ENCODE measurements at regions of chr2 and their contacts with region 1.

Region 1: DNA sequence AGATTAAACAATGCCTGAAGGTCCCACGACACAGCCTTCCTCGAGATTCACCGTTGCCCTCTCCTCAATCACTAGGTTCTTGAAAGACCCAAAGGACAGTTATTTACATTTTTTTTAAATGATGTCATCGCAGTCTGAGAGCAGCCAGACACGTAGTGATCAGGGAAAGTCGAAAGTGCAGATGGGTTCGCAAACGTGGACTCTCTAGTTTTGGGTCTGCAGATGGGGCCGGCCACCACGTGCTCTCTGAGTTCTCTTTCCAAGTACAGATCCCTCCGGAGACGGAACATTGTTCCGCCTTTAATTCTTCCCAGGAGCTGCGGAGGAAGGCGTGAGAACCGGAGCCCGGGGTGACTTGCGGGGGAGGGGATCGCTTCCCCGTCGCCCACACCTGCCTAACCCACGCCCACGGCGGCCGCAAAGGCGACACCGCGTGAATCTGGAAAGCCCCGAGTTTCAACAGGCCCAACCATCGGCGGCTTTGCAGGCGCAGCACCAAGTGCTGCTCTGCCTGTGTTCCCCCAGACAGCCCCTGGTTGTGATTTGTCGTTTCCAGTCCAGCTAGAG is 54.3 kb downstream of the PKDCC start:
- DNase-seq: peak; percentile 88
- H3K4me3 Mint-ChIP-seq: peak overlapping the region; percentile 65
- H3K27ac Mint-ChIP-seq: peak overlapping the region; percentile 91
- H3K4me1 Mint-ChIP-seq: peaks cover 45% of the 10 kb centered on the region
- H3K27me3 Mint-ChIP-seq: no peaks in the 10 kb centered on the region

Region 2: DNA sequence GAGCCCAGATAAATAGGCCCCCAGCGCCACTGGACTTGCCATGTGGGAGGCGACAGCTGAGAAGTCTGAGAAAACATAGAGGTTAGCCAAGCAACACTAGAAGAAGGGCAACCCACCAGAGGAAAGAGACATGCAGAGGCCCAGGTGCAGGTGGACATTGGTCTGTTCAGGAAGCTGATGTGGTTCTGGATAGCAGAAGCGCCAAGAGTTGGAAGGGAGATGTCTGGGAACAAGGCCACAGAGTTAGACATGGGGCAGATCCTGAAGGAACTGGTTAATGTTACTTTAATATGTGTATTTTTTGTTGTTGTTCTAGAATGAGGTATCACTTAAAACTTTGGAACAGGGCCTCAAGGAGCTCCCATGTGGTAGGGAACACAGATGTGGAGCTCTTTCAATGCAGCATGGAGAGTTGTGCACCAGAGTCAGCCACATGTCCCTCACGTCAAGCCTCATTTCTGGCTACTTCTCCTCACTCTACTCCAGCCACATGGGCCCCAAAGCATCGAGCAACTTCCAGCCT is 116.5 kb before region 1 on chr2:
- CTCF ChIA-PET with region 1: no interaction called
- POLR2A ChIA-PET with region 1: no interaction called
- DNase-seq: no peak
- H3K4me3 Mint-ChIP-seq: no peak overlapping the region
- H3K27ac Mint-ChIP-seq: no peak overlapping the region
- H3K4me1 Mint-ChIP-seq: no peaks in the 10 kb centered on the region
- H3K27me3 Mint-ChIP-seq: peaks cover 17% of the 10 kb centered on the region

Region 3: GRCh38 chr2:42028571-42029148 is 73.4 kb before region 1 on chr2:
- CTCF ChIA-PET with region 1: no interaction called
- POLR2A ChIA-PET with region 1: no interaction called
- DNase-seq: no peak
- H3K4me3 Mint-ChIP-seq: no peak overlapping the region
- H3K27ac Mint-ChIP-seq: no peak overlapping the region
- H3K4me1 Mint-ChIP-seq: no peaks in the 10 kb centered on the region
- H3K27me3 Mint-ChIP-seq: peaks cover 27% of the 10 kb centered on the region

Region 4: DNA sequence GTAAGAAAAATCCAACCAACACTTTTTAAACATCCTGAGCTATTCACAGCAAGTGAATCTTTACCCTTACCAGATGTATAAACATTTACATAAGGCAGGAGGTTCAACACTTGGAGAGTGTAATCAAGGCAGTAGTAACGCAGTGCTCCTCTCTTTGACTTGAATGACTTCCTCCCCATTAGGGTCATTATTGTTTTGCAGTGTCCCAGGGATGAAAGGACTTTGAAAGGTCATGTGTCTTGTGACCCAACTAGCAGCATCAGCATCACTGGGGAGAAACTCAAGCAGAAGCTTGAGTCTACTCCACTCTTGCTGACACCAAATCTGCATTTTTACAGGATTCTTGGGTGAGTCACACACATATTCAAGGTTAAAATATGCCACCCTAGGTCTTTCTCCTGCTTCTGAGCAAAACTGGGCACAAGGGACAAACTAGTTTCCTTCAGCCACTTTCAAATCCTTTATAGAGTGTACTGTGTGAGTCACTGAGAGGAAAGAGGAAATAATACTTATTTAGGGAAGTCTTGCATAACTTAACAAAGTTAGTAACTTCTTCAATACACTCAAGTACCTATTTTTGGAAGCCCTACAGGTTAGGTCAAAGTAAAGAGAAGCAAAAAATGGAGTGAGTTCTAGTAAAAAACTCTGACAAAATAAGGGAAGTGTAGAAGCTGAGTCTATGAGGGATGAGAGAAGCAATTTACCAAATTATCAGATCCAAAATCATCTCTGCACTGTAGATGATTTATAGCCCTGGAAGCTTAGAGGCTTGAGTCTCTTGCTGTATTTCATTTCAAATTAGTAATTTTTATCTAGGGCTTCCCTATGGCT is 16.0 kb after region 1 on chr2:
- CTCF ChIA-PET with region 1: interaction called, 15 read pairs
- POLR2A ChIA-PET with region 1: interaction called, 240 read pairs
- DNase-seq: no peak
- H3K4me3 Mint-ChIP-seq: no peak overlapping the region
- H3K27ac Mint-ChIP-seq: peak overlapping the region; percentile 60
- H3K4me1 Mint-ChIP-seq: peaks cover 38% of the 10 kb centered on the region
- H3K27me3 Mint-ChIP-seq: no peaks in the 10 kb centered on the region

Region 5: GRCh38 chr2:42132966-42133641 is 31.0 kb after region 1 on chr2:
- CTCF ChIA-PET with region 1: interaction called, 32 read pairs
- POLR2A ChIA-PET with region 1: interaction called, 240 read pairs
- DNase-seq: peak; percentile 96
- H3K4me3 Mint-ChIP-seq: peak overlapping the region; percentile 62
- H3K27ac Mint-ChIP-seq: peak overlapping the region; percentile 98
- H3K4me1 Mint-ChIP-seq: peaks cover 88% of the 10 kb centered on the region
- H3K27me3 Mint-ChIP-seq: no peaks in the 10 kb centered on the region

Region 6: GRCh38 chr2:42169100-42169873 is 67.2 kb after region 1 on chr2 and contains the start of gene EML4:
- CTCF ChIA-PET with region 1: interaction called, 30 read pairs
- POLR2A ChIA-PET with region 1: interaction called, 109 read pairs
- DNase-seq: peak; percentile 92
- H3K4me3 Mint-ChIP-seq: no peak within 1 kb of the TSS
- H3K27ac Mint-ChIP-seq: peak within 1 kb of the TSS; percentile 63
- H3K4me1 Mint-ChIP-seq: peaks cover 24% of the 10 kb centered on the region
- H3K27me3 Mint-ChIP-seq: peaks cover 7% of the 10 kb centered on the region
- total RNA-seq, gene EML4: 130 to 133 TPM

Region 7: DNA sequence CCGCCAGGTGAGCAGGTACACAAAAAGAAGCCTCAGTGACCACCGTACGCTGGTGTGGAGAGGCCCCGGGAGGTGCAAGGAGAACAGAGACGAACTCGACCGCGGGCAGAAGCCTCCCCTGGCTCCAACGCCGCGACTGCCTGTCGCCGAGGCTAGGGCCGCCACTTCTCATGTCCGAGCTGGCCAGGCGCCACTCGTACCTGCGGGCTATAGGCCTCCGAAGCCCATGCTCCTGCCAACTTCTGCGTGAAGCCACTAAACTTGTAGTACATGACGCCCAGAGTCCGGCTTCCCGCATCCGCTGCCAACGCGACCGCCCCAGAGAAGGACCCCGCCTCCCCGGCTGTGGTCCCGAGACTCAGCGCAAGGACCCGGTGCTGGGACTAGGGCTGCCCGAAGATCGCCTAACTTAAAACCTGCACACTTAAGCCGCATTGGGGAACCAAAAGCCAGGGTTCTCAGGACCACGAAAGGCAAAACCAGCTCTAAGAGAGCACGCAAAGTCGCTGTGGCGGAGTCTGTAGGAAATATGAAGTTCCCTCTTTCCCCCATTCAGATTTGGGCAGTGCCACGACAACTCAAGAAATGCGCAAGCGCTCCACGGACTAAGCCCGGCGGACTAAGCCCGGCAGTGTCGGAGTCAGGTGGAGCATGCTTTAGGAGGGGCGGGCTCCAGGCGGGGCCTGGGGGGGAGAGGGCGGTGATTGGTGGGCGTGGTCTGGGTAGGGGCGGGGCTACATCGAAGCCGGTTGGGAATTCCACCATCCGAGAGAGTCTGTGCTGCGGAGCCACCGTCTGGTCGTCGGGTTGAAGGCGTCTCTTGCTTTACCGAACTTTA is 259.0 kb after region 1 on chr2 and contains the start of gene COX7A2L:
- CTCF ChIA-PET with region 1: interaction called, 4 read pairs
- POLR2A ChIA-PET with region 1: interaction called, 10 read pairs
- DNase-seq: peak; percentile 95
- H3K4me3 Mint-ChIP-seq: peak within 1 kb of the TSS; percentile 82
- H3K27ac Mint-ChIP-seq: peak within 1 kb of the TSS; percentile 85
- H3K4me1 Mint-ChIP-seq: peaks cover 45% of the 10 kb centered on the region
- H3K27me3 Mint-ChIP-seq: peaks cover 6% of the 10 kb centered on the region
- total RNA-seq, gene COX7A2L: 102 TPM

Measured in activated CD4-positive, alpha-beta memory T cell treated with anti-CD3 and anti-CD28 coated beads, Interleukin-2, amount 10 ng/mL, durations not matched to agents 7 days and 5 days (primary cell).